Activated CD4-positive, alpha-beta T cell treated with anti-CD3 and anti-CD28 coated beads, Interleukin-2, amount 10 ng/mL, durations not matched to agents 24 days and 14 days (primary cell): ENCODE measurements at regions of chr16 and their contacts with region 1.

Region 1: GRCh38 chr16:53865494-53865863 is 161.5 kb downstream of the FTO start:
- DNase-seq: peak; percentile 51
- H3K4me3 Mint-ChIP-seq: peak overlapping the region; percentile 58
- H3K27ac Mint-ChIP-seq: peak overlapping the region; percentile 89
- H3K4me1 Mint-ChIP-seq: peaks cover 16% of the 10 kb centered on the region
- H3K27me3 Mint-ChIP-seq: no peaks in the 10 kb centered on the region

Region 2: DNA sequence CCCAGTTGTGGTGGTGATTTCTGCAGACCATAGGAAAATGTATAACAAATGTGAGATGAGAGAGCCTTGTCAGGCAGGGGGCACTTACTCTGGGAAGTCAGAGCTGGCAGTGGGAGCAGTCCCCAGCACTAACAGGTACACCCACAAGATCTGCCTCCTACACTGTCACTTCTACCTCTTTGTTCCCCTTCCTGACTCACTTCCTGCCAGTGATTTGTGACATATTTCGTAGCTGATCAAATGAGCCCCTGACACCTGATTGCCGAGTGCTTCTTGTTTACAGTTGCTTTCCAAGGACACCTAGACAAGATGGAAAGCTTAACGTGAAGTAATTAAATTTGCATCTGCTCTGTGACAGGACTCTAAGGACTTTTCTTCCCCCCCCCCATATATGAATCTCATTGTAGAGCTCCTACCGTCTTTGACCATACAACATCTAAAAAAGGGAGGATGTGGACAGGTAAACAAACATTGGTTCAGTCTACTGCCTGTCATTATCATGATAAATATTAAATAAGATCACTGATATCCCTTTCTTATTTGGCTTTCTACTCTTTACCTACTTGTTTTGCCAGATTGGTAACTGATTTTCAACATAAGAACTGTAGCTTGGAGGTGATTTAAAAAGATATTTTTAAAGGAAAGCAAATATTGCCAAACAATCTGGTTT is 120.9 kb before region 1 on chr16:
- intact Hi-C with region 1: loop called (anchors 1 kb)
- DNase-seq: peak; percentile 70
- H3K4me3 Mint-ChIP-seq: peak overlapping the region; percentile 24
- H3K27ac Mint-ChIP-seq: peak overlapping the region; percentile 21
- H3K4me1 Mint-ChIP-seq: peaks cover 26% of the 10 kb centered on the region
- H3K27me3 Mint-ChIP-seq: no peaks in the 10 kb centered on the region

Region 3: GRCh38 chr16:53773150-53773846 is 92.2 kb before region 1 on chr16:
- intact Hi-C with region 1: loop called (anchors 10 kb)
- DNase-seq: peak; percentile 75
- H3K4me3 Mint-ChIP-seq: no peak overlapping the region
- H3K27ac Mint-ChIP-seq: no peak overlapping the region
- H3K4me1 Mint-ChIP-seq: peaks cover 21% of the 10 kb centered on the region
- H3K27me3 Mint-ChIP-seq: no peaks in the 10 kb centered on the region

Region 4: GRCh38 chr16:53960954-53961469 is 95.5 kb after region 1 on chr16:
- intact Hi-C with region 1: no loop called
- DNase-seq: no peak
- H3K4me3 Mint-ChIP-seq: no peak overlapping the region
- H3K27ac Mint-ChIP-seq: no peak overlapping the region
- H3K4me1 Mint-ChIP-seq: peaks cover 9% of the 10 kb centered on the region
- H3K27me3 Mint-ChIP-seq: no peaks in the 10 kb centered on the region